ENCODE measurements at regions of chr11 and their contacts with region 1.

Region 1: GRCh38 chr11:108664730-108665525 is at the start of gene DDX10:
- DNase-seq: peak; percentile 95 to 99 (median 98)
- ATAC-seq: peak; percentile 99
- H3K4me3 ChIP-seq: peak within 1 kb of the TSS; percentile 80
- H3K4me3 Mint-ChIP-seq: peak within 1 kb of the TSS; percentile 91 to 100 (median 100)
- H3K27ac ChIP-seq: peak within 1 kb of the TSS; percentile 77
- H3K27ac Mint-ChIP-seq: peak within 1 kb of the TSS; percentile 79 to 100 (median 97)
- H3K4me1 ChIP-seq: peaks cover 18 to 22% of the 10 kb centered on the region in 2 donors
- H3K4me1 Mint-ChIP-seq: peaks cover 24 to 56% (median 47%) of the 10 kb centered on the region in 7 donors
- H3K27me3 ChIP-seq: no peaks in the 10 kb centered on the region
- H3K27me3 Mint-ChIP-seq: peaks cover 0 to 9% (median 0%) of the 10 kb centered on the region in 5 donors
- total RNA-seq, gene DDX10: 16.7 to 34.6 (median 22.8) TPM

Region 2: DNA sequence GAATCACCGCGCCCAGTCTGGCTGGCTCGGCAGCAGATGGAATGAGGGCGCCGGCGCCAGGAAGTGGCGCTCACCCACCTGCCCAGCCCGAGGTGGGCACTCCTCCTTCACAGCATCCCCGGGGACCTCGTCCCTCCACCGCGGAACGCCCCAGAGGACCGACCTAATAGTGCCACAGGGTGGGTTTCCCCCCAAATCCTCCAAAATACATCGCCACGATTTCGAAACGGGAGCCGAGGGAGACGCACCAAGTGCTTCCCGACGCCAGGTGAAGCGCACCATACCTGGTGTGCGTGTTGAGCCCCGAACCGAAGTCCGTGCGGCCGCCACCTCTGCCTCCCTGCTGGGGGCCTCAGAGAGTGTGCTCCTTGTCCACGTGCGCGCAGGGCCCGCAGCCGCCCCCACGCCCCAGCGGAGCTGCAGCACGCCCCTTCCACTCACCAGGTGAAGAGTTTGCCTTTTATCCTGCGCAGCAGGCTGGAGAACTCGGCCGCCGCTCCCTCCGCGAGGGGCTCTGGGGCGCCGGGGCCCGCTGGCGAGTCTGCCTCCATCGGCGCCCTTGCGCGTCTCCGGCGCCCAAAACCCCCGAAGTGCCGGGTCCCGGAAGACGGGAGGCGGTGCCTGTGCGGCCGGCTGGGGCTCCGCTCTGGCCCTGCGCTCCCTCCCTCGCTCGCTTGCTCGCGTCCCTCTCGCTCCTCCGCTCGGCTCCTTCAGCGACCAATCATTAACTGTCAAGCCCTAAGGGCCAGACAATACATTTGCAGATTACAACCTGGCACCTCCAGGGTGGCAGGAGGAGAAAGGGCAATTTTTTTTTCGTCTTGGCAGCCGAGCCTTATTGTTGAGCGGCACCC is 806.5 kb before region 1 on chr11 and contains the start of gene SLC35F2:
- CTCF ChIA-PET with region 1: no interaction called
- POLR2A ChIA-PET with region 1: no interaction called
- intact Hi-C with region 1: loop called in 1 of 2 experiments (anchors 10 kb)
- DNase-seq: peak; percentile 15 to 81 (median 45)
- ATAC-seq: peak; percentile 88
- H3K4me3 ChIP-seq: peak within 1 kb of the TSS; percentile 88
- H3K4me3 Mint-ChIP-seq: peak within 1 kb of the TSS; percentile 89 to 98 (median 95)
- H3K27ac ChIP-seq: peak within 1 kb of the TSS; percentile 65
- H3K27ac Mint-ChIP-seq: peak within 1 kb of the TSS; percentile 21 to 88 (median 77)
- H3K4me1 ChIP-seq: no peaks in the 10 kb centered on the region
- H3K4me1 Mint-ChIP-seq: peaks cover 5 to 33% (median 26%) of the 10 kb centered on the region in 7 donors
- H3K27me3 ChIP-seq: no peaks in the 10 kb centered on the region
- H3K27me3 Mint-ChIP-seq: peaks cover 0 to 17% (median 4%) of the 10 kb centered on the region in 5 donors
- total RNA-seq, gene SLC35F2: 3.8 to 8.9 (median 4.5) TPM

Region 3: GRCh38 chr11:107928046-107928766 is 736.7 kb before region 1 on chr11 and contains the start of gene RAB39A:
- CTCF ChIA-PET with region 1: no interaction called
- POLR2A ChIA-PET with region 1: no interaction called
- intact Hi-C with region 1: loop called in 1 of 2 experiments (anchors 10 kb)
- DNase-seq: peak in 8 of 9 donors; percentile 25 to 73 (median 35)
- ATAC-seq: peak; percentile 92
- H3K4me3 ChIP-seq: no peak within 1 kb of the TSS
- H3K4me3 Mint-ChIP-seq: peak within 1 kb of the TSS; percentile 22 to 84 (median 67)
- H3K27ac ChIP-seq: no peak within 1 kb of the TSS
- H3K27ac Mint-ChIP-seq: peak within 1 kb of the TSS in 1 of 9 donors; percentile 33
- H3K4me1 ChIP-seq: peaks cover 6 to 7% of the 10 kb centered on the region in 2 donors
- H3K4me1 Mint-ChIP-seq: peaks cover 5 to 15% (median 11%) of the 10 kb centered on the region in 7 donors
- H3K27me3 ChIP-seq: peaks cover 0 to 15% of the 10 kb centered on the region in 2 donors
- H3K27me3 Mint-ChIP-seq: peaks cover 36 to 62% (median 52%) of the 10 kb centered on the region in 5 donors
- total RNA-seq, gene RAB39A: 0.38 to 1.6 TPM in 2 of 5 experiments, not detected in the others

Region 4: DNA sequence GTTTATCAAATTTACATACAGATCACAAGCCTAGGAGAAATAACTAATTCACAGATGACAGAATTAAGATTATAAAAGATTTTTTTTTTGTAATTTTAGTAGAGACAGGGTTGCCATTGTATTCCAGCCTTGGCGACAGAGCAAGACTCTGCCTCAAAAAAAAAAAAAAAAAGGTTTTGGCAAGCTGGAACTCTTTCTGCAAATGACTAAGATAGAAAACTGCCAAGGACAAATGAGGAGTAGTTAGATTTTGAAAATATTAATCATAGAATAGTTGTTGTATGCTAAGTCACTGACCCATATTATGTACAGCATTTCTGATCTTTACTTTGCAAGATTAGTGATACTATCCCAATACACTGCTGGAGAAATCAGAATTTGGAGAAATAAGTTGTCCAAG is 296.8 kb before region 1 on chr11:
- CTCF ChIA-PET with region 1: no interaction called
- POLR2A ChIA-PET with region 1: no interaction called
- intact Hi-C with region 1: no loop called
- DNase-seq: no peak
- ATAC-seq: no peak
- H3K4me3 ChIP-seq: no peak overlapping the region
- H3K4me3 Mint-ChIP-seq: no peak overlapping the region
- H3K27ac ChIP-seq: no peak overlapping the region
- H3K27ac Mint-ChIP-seq: peak overlapping the region in 3 of 9 donors; percentile 21 to 62 (median 38)
- H3K4me1 ChIP-seq: no peaks in the 10 kb centered on the region
- H3K4me1 Mint-ChIP-seq: peaks cover 0 to 9% (median 0%) of the 10 kb centered on the region in 7 donors
- H3K27me3 ChIP-seq: no peaks in the 10 kb centered on the region
- H3K27me3 Mint-ChIP-seq: no peaks in the 10 kb centered on the region

Region 5: GRCh38 chr11:108497317-108498045 is 167.4 kb before region 1 on chr11:
- CTCF ChIA-PET with region 1: no interaction called
- POLR2A ChIA-PET with region 1: no interaction called
- intact Hi-C with region 1: loop called (anchors 1 kb)
- DNase-seq: peak in 8 of 9 donors; percentile 68 to 83 (median 76)
- ATAC-seq: peak; percentile 92
- H3K4me3 ChIP-seq: peak overlapping the region; percentile 77
- H3K4me3 Mint-ChIP-seq: peak overlapping the region; percentile 95 to 100 (median 98)
- H3K27ac ChIP-seq: peak overlapping the region; percentile 87
- H3K27ac Mint-ChIP-seq: peak overlapping the region; percentile 95 to 100 (median 99)
- H3K4me1 ChIP-seq: peaks cover 0 to 3% of the 10 kb centered on the region in 2 donors
- H3K4me1 Mint-ChIP-seq: peaks cover 8 to 33% (median 24%) of the 10 kb centered on the region in 7 donors
- H3K27me3 ChIP-seq: no peaks in the 10 kb centered on the region
- H3K27me3 Mint-ChIP-seq: no peaks in the 10 kb centered on the region

Region 6: DNA sequence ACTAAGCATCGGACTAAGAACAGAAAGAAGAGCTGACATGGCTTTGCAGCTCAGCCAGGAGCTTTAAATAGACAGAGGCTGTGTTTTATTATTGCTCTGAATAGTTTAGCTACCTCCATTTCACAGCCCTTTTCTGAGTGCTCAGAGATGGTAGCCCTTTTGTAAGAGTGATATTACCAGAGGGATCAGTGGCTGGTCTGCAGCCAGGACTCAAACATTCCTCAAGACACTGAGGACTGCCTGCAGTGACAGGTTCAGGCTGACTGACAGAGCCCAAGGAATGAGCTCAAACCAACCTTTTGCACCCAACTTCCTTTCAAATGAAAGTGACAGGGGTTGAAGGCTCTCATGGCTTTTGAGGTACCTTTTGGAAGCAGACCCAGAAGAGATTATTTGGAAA is 188.9 kb after region 1 on chr11:
- CTCF ChIA-PET with region 1: no interaction called
- POLR2A ChIA-PET with region 1: no interaction called
- intact Hi-C with region 1: loop called in 1 of 2 experiments (anchors 1 kb)
- DNase-seq: peak in 5 of 9 donors; percentile 3 to 19 (median 8)
- ATAC-seq: peak; percentile 52
- H3K4me3 ChIP-seq: peak overlapping the region; percentile 51
- H3K4me3 Mint-ChIP-seq: peak overlapping the region; percentile 78 to 95 (median 87)
- H3K27ac ChIP-seq: peak overlapping the region; percentile 79
- H3K27ac Mint-ChIP-seq: peak overlapping the region; percentile 91 to 100 (median 97)
- H3K4me1 ChIP-seq: peaks cover 5 to 10% of the 10 kb centered on the region in 2 donors
- H3K4me1 Mint-ChIP-seq: peaks cover 15 to 49% (median 33%) of the 10 kb centered on the region in 7 donors
- H3K27me3 ChIP-seq: no peaks in the 10 kb centered on the region
- H3K27me3 Mint-ChIP-seq: no peaks in the 10 kb centered on the region

Measured in naive thymus-derived CD4-positive, alpha-beta T cell (primary cell).